ENCODE measurements at regions of chr1 and their contacts with region 1.

Region 1: GRCh38 chr1:171485375-171486047 is at the start of gene PRRC2C:
- DNase-seq: peak; percentile 85 to 97 (median 94)
- ATAC-seq: peak; percentile 80 to 83
- H3K4me3 Mint-ChIP-seq: peak within 1 kb of the TSS; percentile 89 to 100 (median 95)
- H3K27ac Mint-ChIP-seq: peak within 1 kb of the TSS; percentile 94 to 100 (median 100)
- H3K4me1 Mint-ChIP-seq: peaks cover 26 to 56% (median 50%) of the 10 kb centered on the region in 4 donors
- H3K27me3 Mint-ChIP-seq: no peaks in the 10 kb centered on the region
- polyA plus RNA-seq, gene PRRC2C: 30.0 to 82.8 (median 53.5) TPM

Region 2: DNA sequence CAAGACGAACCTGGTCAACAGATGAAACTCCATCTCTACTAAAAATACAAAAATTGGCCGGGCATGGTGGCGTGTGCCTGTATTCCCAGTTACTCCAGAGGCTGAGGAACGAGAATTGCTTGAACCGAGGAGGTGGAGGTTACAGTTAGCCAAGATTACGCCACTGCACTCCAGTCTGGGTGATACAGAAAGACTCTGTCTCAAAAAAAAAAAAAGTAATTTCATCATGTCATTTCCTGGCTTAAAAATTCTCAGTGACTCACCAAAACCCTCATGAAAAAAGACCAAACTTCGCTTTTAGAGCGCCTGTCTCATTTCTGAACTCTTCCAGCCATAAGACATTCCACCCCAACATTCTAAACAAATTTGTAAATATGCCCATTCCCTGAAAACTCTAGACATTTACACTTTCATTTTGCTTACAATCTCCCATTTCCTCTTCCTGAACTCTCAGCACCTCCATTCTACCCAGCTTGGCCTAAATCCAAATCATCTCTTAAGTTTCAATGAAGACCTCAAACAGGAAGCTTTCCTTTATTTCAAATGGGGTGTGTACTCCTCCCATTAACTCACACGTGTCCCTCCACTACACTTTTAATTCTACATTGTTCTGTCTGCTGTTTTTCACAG is 50.7 kb before region 1 on chr1:
- POLR2A ChIA-PET with region 1: no interaction called
- DNase-seq: peak in 2 of 10 donors; percentile 17 to 18
- ATAC-seq: peak; percentile 65 to 83
- H3K4me3 Mint-ChIP-seq: peak overlapping the region; percentile 0 to 83 (median 62)
- H3K27ac Mint-ChIP-seq: peak overlapping the region; percentile 14 to 93 (median 78)
- H3K4me1 Mint-ChIP-seq: peaks cover 5 to 16% (median 11%) of the 10 kb centered on the region in 4 donors
- H3K27me3 Mint-ChIP-seq: peaks cover 0 to 15% (median 1%) of the 10 kb centered on the region in 5 donors

Region 3: DNA sequence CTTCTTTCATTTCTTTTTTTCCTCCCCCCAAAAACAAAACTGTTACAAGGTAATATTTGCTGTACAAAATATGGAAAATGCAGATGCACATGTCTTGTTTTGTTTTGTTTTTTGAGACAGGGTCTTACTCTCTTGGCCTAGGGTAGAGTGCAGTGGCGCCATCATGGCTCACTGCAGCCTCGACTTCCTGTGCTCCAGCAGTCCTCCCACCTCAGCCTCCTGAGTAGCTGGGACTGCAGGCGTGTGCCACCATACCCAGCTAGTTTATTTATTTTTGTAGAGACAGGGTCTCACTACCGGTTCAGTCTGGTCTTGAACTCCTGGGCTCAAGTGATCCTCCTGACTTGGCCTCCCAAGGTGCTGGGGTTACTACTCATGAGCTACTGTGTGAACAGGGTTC is 15.3 kb after region 1 on chr1:
- POLR2A ChIA-PET with region 1: interaction called, 10 read pairs
- DNase-seq: no peak
- ATAC-seq: no peak
- H3K4me3 Mint-ChIP-seq: peak overlapping the region in 7 of 10 donors; percentile 1 to 56 (median 26)
- H3K27ac Mint-ChIP-seq: peak overlapping the region in 7 of 10 donors; percentile 22 to 89 (median 53)
- H3K4me1 Mint-ChIP-seq: peaks cover 38 to 92% (median 90%) of the 10 kb centered on the region in 4 donors
- H3K27me3 Mint-ChIP-seq: no peaks in the 10 kb centered on the region

Region 4: GRCh38 chr1:171610385-171610784 is 124.9 kb after region 1 on chr1:
- POLR2A ChIA-PET with region 1: no interaction called
- DNase-seq: no peak
- ATAC-seq: no peak
- H3K4me3 Mint-ChIP-seq: no peak overlapping the region
- H3K27ac Mint-ChIP-seq: no peak overlapping the region
- H3K4me1 Mint-ChIP-seq: peaks cover 0 to 2% (median 0%) of the 10 kb centered on the region in 4 donors
- H3K27me3 Mint-ChIP-seq: peaks cover 0 to 5% (median 0%) of the 10 kb centered on the region in 5 donors

Region 5: DNA sequence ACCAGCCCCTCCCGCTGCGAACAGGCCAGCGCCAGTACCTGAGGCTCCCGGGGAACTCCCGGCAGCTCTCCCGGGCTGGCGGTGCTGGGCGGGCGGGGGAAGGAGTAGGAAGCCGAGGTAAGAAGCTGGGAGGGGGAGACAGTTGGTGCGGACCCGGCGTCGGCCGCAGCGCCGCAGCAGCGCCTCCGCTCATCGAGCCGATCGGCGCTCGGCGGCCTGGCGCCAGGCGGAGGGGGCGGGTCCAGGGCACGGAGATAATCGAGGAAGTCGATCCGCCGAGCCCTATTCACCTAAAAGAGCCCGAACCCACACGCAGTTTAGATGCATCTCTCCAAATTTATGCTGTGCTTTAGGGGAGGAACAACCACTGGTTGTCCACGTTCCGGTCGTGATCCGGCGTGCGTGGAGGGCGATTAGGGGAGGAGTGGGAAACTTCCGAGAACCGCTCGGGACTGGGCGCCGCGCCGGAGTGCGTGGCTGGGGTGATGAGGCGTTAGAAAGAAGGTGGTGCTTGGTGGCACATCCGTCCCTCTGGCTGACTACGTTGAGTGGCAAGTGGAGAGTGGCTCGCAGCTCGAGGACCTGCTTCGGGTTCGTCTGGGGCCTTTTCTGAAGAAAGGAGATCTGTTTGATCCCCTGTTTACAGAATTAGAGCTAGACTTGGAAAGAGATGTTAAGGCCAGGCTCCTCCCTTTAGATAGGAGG is 256.5 kb after region 1 on chr1 and contains the start of gene VAMP4:
- POLR2A ChIA-PET with region 1: interaction called, 26 read pairs
- DNase-seq: peak; percentile 78 to 94 (median 84)
- ATAC-seq: peak; percentile 90 to 93
- H3K4me3 Mint-ChIP-seq: peak within 1 kb of the TSS; percentile 93 to 100 (median 100)
- H3K27ac Mint-ChIP-seq: peak within 1 kb of the TSS; percentile 98 to 100 (median 100)
- H3K4me1 Mint-ChIP-seq: peaks cover 29 to 61% (median 52%) of the 10 kb centered on the region in 4 donors
- H3K27me3 Mint-ChIP-seq: no peaks in the 10 kb centered on the region
- polyA plus RNA-seq, gene VAMP4: 18.3 to 19.9 (median 19.8) TPM

Region 6: DNA sequence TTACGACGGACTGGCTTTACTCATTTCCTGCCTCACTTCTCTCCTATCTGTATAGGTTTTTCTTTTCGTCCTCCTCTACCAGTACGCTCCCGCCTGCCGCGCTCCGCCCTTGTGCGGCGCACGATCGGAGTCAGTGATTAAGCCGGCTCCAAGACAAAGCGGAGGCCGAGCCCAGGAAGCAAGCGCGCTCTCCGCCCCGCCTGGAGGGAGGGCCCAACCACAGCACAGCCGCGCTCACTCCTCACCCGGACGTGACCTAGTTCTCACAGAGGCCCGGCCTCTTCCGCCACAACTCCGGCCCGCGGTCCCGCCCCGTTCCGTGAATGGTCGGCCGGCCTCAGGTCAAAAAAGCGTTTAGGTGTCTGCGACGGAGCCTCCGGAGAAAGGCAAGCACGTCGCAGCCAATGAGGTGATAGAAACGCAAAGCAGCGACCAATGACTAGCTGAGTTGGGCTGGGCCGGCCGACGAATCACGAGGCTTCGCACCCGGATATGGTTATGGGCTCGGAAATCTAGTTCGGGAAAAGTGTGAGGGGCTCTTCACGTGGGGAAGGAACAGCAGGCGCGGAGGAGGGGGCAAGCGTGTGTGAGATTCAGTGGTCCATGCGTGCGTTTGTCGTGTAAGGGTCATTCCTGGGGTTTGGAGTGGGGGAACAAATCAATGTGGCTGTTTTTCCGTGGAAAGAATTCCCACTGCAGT is 295.8 kb after region 1 on chr1 and contains the start of gene METTL13:
- POLR2A ChIA-PET with region 1: interaction called, 14 read pairs
- DNase-seq: peak; percentile 92 to 100 (median 98)
- ATAC-seq: peak; percentile 92
- H3K4me3 Mint-ChIP-seq: peak within 1 kb of the TSS; percentile 95 to 100 (median 98)
- H3K27ac Mint-ChIP-seq: peak within 1 kb of the TSS; percentile 97 to 99 (median 98)
- H3K4me1 Mint-ChIP-seq: peaks cover 31 to 61% (median 50%) of the 10 kb centered on the region in 4 donors
- H3K27me3 Mint-ChIP-seq: no peaks in the 10 kb centered on the region
- polyA plus RNA-seq, gene METTL13: 19.5 to 41.2 (median 33.4) TPM